ENCODE measurements at regions of chr7 and their contacts with region 1.

Region 1: GRCh38 chr7:78769481-78770101 is 683.9 kb downstream of the MAGI2 start:
- DNase-seq: peak in 32 of 42 donors; percentile 5 to 70 (median 28)

Region 2: GRCh38 chr7:78510580-78511188 is 258.9 kb before region 1 on chr7:
- intact Hi-C with region 1: loop called (anchors 10 kb)
- DNase-seq: peak in 36 of 42 donors; percentile 25 to 86 (median 60)

Region 3: DNA sequence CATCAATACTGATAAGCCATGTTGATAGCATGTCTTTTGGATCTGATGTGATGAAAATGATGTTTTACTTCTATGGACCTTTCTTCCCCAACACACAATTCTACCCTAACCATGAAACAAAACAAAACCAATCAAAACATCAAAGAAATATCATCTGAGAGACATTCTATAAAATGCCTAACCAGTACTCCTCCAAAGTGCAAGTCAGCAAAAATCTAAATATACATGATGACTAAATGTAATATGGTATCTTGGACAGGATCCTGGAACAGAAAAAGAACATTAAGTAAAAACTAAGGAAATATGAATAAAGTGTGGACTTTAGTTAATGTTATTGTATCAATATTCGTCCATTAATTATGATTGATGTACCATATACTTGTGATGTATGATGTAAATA is 58.7 kb after region 1 on chr7:
- intact Hi-C with region 1: no loop called
- DNase-seq: no peak

Region 4: DNA sequence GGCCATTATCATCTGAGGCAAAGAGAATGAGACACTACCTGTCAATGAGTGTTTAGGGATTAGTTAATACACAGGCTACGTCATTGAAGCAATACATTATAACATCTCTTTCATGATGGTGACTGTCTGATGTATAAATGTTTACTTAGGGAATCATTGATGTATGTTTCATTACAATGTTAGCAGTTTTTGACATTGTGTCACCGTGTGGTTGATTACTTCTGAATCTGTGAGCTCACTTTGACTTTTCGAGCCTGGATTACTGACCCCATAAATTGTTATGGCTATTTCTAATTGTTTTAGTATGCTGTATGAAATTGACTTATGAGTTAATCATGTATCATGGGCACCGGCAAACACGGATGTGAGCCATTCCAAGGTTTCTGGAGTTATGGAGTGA is 189.9 kb after region 1 on chr7:
- intact Hi-C with region 1: no loop called
- DNase-seq: no peak

Measured in head of caudate nucleus (tissue), 42 donors.